WTC11 (cell line): ENCODE measurements at regions of chr10 and their contacts with region 1.

Region 1: DNA sequence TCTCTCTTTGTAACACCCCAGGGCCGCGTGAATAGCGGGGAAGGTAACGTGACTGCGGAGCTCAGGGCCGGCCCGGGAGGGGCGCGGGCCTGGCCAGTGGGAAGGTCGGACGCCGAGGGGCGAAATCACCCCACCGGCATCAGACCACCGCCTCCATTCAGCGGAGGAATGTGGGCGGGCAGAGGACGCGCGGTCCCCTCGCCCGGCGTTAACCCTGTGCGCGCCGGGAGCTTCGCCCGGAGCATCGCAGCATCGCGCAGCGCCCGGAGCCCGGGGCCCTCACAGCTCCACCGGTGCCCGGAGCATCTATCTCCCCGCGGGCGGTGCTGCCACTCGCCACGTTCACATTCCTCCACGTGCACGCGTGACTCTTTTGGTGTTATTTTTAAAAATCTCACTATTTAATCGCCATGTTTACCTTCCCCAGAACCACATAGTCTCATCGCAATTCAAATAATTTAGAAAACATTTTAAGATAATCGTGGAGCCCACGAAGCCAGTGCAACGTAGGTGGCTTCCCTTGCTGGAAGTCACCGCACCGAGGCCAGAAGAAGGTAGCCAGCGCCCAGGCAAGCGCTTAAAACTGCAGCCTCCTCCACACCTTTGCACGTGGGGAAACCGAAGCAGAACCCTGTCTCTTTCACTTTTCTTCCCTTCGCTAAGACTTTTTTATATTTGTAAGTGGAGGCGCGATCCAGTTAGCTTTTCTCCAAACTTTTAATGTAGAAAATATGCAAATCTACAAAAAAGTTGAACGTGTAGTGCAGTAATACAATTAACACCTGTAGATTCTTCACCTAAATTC is 21.8 kb downstream of the FGFBP3 start:
- DNase-seq: peak; percentile 92
- ATAC-seq: peak; percentile 92
- H3K4me3 Mint-ChIP-seq: peak overlapping the region; percentile 66
- H3K27ac Mint-ChIP-seq: peak overlapping the region; percentile 99
- H3K4me1 Mint-ChIP-seq: peaks cover 61% of the 10 kb centered on the region
- H3K27me3 Mint-ChIP-seq: no peaks in the 10 kb centered on the region
- CTCF ChIP-seq: no peak

Region 2: GRCh38 chr10:91816981-91817380 is 70.5 kb before region 1 on chr10:
- CTCF ChIA-PET with region 1: no interaction called
- POLR2A ChIA-PET with region 1: no interaction called
- DNase-seq: no peak
- ATAC-seq: no peak
- H3K4me3 Mint-ChIP-seq: no peak overlapping the region
- H3K27ac Mint-ChIP-seq: 0 out of 2 replicates have a peak overlapping the region, but pooled peaks have one; percentile 18
- H3K4me1 Mint-ChIP-seq: no peaks in the 10 kb centered on the region
- H3K27me3 Mint-ChIP-seq: no peaks in the 10 kb centered on the region
- CTCF ChIP-seq: no peak

Region 3: DNA sequence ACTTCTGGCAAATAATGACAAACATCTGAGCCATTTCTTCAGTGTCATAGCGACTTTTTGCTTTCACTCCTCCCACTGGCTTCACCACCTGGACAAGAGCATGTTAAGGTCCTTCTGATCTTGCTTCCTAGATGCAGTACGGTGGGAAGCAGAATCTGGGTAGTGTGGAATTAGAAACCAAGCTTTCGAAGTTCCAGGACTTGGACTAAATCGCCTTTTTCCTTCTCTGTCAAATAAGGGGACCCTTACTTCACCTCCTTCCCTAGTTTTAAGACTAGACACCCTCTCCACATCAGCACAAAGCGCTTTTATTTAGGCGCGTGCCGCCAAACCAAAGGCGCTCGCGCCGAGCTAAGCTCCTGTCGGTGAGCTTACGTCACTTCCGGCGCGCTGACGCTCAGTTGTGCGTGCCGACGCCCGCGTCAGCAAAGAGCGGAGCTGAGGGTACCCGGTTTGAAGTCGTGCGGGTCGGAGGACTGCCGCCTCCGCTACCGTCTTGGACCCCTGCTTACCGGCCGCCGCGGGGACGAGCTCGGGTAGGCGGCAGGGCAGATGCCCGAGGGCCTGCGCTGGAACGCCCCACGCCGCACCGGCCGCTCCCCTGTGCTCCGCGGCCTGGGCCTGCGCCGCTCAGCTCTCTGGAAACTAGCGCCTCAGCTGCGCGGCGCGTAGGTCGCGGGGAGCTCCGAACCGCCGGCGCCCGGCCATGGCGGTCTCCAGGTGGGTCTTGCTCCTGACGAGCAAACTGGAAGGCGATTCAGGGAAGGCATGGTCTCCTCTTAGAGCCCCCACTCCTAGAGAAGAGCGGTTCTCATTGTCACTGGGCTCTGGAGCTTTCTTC is 36.1 kb after region 1 on chr10 and contains the start of gene BTAF1:
- CTCF ChIA-PET with region 1: interaction called, 5 read pairs
- POLR2A ChIA-PET with region 1: interaction called, 13 read pairs
- DNase-seq: peak; percentile 86
- ATAC-seq: peak; percentile 94
- H3K4me3 Mint-ChIP-seq: peak within 1 kb of the TSS; percentile 90
- H3K27ac Mint-ChIP-seq: peak within 1 kb of the TSS; percentile 97
- H3K4me1 Mint-ChIP-seq: peaks cover 27% of the 10 kb centered on the region
- H3K27me3 Mint-ChIP-seq: peaks cover 5% of the 10 kb centered on the region; the same call in 1 of the 2 replicates
- CTCF ChIP-seq: no peak
- total RNA-seq, gene BTAF1: 47.2 to 49.6 TPM (median 49.2 TPM) in 3 replicates